ENCODE measurements at regions of chr5 and their contacts with region 1.

Region 1: DNA sequence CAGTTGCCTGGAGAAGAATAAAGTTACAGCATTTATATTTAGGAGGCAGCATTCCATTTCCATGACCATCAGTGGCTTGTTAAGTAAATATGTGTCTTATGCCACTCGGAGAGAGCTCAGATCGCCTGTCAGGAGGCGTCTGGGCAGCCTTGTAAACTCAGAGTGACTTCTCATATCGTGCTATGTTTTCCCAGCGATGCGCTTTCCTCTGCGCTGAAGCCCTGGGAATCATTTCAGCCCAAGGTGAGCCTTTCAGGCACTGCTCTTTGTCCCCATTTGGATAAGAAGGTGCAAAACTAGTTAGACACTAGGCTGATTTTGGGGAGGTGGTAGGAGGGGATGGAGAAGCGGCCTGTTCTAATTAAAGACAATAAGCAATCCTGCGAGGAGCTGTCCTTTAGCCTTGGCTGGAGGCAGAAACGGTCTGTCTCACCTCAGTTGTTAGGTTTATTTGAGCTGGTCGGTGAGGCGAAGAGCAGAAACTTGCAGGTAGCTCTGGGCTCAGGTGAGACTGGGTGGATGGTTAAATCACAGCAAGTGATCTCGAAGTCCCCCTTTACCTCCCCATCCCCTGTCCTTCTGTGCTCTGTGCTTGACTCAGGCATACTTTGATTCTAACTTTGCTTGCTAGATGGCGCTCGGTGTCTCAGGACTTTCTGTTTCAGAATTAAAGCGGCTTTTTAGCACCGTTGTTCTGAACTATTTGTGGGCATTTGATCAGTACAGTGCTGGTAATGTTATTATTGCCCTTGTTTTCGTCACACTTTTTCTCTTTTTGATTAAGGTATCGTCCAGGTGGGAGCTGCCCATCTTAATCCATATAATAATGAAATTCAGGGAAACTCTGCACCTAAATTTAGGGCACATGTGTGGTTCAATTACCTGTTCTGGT is 24.6 kb downstream of the NR2F1 start:
- DNase-seq: no peak
- H3K4me3 ChIP-seq: peak overlapping the region in 1 of 4 donors; percentile 26
- H3K27ac ChIP-seq: peak overlapping the region in 1 of 4 donors; percentile 17
- H3K4me1 ChIP-seq: peaks cover 12 to 33% (median 13%) of the 10 kb centered on the region in 3 donors
- H3K27me3 ChIP-seq: peaks cover 7 to 100% (median 27%) of the 10 kb centered on the region in 4 donors
- CTCF ChIP-seq: peak in 4 of 6 experiments; percentile 13 to 45 (median 32)
- POLR2A ChIP-seq: no peak

Region 2: GRCh38 chr5:93789173-93790070 is 181.8 kb after region 1 on chr5:
- intact Hi-C with region 1: loop called (anchors 10 kb)
- DNase-seq: no peak
- H3K4me3 ChIP-seq: no peak overlapping the region
- H3K27ac ChIP-seq: peak overlapping the region in 3 of 4 donors; percentile 18 to 61 (median 53)
- H3K4me1 ChIP-seq: peaks cover 0 to 51% (median 18%) of the 10 kb centered on the region in 3 donors
- H3K27me3 ChIP-seq: no peaks in the 10 kb centered on the region
- CTCF ChIP-seq: no peak
- POLR2A ChIP-seq: no peak

Measured in esophagus squamous epithelium (tissue), 5 donors.